AG04450 (cell line): ENCODE measurements at regions of chr11 and their contacts with region 1.

Region 1: GRCh38 chr11:59753650-59754493 is 1.3 kb upstream of the STX3 start:
- DNase-seq: peak; percentile 26
- H3K4me3 ChIP-seq: peak overlapping the region; percentile 85
- H3K27ac ChIP-seq: no peak overlapping the region
- H3K27me3 ChIP-seq: no peaks in the 10 kb centered on the region
- CTCF ChIP-seq: peak; percentile 91

Region 2: DNA sequence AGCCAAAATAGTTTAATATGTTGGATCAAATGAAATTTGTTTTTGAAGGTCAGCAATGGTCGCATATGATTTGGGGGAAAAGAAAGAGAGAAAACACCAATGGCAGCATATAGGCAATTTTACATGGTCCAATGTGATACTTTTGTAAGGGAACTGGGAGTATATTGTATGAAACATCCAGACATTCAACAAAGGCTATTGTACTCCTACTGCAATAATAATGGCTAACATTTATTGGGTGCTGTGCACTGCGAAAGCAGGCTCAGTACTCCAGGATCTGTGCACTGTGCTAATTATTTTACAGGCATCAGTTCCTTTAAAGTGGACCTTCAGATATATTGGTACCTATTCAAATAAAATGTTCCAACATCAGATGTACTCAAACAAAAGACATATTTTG is 34.3 kb before region 1 on chr11:
- CTCF ChIA-PET with region 1: no interaction called
- POLR2A ChIA-PET with region 1: no interaction called
- DNase-seq: no peak
- H3K4me3 ChIP-seq: no peak overlapping the region
- H3K27ac ChIP-seq: no peak overlapping the region
- H3K27me3 ChIP-seq: no peaks in the 10 kb centered on the region
- CTCF ChIP-seq: no peak

Region 3: DNA sequence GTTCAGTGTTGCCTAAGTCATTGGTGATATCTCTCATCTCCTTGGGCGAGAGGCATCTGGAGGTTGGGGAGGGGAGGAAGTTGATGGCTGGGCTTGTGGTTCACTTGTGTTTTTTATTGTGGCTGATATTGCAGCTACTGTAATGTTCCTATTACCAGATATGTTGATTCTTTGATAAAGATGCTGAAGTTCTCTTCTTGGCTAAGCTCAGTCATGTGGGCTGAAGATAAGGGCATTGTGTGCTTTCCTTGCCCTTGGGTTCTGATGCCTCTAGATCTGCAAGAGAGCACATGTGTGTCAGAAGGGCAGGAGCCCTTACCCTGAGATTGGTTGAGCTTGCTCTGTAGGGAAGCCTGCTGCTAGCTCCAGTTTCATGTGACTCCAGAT is 13.3 kb after region 1 on chr11:
- CTCF ChIA-PET with region 1: interaction called, 15 read pairs
- POLR2A ChIA-PET with region 1: no interaction called
- DNase-seq: no peak
- H3K4me3 ChIP-seq: no peak overlapping the region
- H3K27ac ChIP-seq: no peak overlapping the region
- H3K27me3 ChIP-seq: no peaks in the 10 kb centered on the region
- CTCF ChIP-seq: no peak

Region 4: GRCh38 chr11:59802639-59803176 is 48.8 kb after region 1 on chr11:
- CTCF ChIA-PET with region 1: interaction called, 79 read pairs
- POLR2A ChIA-PET with region 1: interaction called, 8 read pairs
- DNase-seq: no peak
- H3K4me3 ChIP-seq: no peak overlapping the region
- H3K27ac ChIP-seq: no peak overlapping the region
- H3K27me3 ChIP-seq: no peaks in the 10 kb centered on the region
- CTCF ChIP-seq: peak; percentile 67

Region 5: GRCh38 chr11:59810189-59810910 is 56.5 kb after region 1 on chr11 and contains the start of gene MRPL16:
- CTCF ChIA-PET with region 1: interaction called, 42 read pairs
- POLR2A ChIA-PET with region 1: interaction called, 3 read pairs
- DNase-seq: peak; percentile 69
- H3K4me3 ChIP-seq: peak within 1 kb of the TSS; percentile 100
- H3K27ac ChIP-seq: peak within 1 kb of the TSS; percentile 39
- H3K27me3 ChIP-seq: no peaks in the 10 kb centered on the region
- CTCF ChIP-seq: peak; percentile 22; the same call in 1 of the 2 replicates
- polyA plus RNA-seq, gene MRPL16: 65.0 and 72.3 TPM in 2 replicates